ENCODE measurements at regions of chr14 and their contacts with region 1.

Region 1: DNA sequence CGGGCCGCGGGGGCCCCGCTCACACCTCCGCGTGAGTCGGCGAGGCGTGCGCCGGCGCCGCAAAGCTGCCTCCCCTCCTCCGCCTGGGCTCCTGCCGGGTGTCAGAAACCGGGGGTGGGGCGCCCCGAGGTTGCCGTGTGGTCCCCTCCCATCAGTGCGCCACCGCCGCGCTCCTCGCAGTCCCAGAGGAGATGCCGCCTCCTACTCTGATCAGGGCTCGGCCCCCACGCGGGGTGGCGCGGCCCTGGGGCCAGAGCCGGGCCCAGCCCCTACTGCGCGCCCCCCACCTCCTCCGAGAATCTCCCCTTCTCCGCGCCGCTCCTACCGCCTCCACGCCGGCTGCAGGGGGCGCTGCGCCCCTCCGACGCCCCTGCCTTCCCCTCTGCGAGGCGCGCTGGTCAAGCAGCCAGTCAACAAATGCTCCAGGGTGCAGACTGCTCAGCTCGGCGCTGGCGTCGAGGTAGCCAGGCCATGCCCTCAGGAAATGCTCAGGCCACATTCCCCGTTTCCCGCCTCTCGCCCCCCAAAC is 467 bp upstream of the JAG2 start:
- DNase-seq: peak; percentile 81
- H3K4me3 ChIP-seq: peak overlapping the region; percentile 11 to 41 (median 16)
- H3K27ac ChIP-seq: peak overlapping the region; percentile 2
- H3K4me1 ChIP-seq: peaks cover 39% of the 10 kb centered on the region
- H3K27me3 ChIP-seq: no peaks in the 10 kb centered on the region
- CTCF ChIP-seq: peak; percentile 86 to 92
- POLR2A ChIP-seq: no peak

Region 2: DNA sequence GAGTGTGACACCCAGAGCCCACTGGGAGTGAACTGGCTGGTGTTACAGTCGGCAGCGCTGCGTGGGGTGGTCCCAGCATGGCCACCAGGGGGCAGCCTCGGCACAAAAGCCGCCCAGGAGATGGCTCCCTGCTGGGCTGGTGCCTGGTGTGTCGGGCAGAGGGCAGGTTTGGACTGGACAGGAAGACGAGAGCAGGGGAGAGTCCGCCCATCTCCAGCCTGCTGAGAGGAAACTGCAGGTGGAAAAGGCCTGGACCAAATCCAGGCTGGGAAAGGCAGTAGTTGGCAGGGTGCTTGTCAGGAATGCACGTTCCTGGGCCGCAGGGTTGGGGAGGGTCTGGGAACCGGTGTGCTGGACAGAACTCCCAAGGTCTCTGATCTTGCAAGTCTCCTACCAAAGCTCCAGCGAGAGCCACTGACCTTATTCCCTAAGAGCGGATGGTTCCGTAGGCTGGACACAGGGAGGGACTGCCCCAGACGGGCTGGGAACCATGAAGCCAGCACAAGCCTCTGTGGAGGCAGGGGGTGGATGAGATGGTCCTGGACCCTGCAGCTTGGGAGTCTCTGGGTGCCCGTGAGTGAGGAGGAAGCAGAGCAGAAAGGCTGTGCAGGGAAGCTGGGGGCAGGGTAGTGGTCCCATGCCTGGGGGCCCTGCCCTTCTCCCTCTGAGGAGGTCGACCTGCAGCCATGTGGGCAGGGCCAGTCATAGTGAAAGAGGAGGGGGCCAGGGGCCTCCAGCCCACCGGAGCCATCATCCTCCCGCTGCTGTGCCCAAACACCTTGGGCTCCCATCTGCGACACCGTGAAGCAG is 192.6 kb before region 1 on chr14:
- CTCF ChIA-PET with region 1: no interaction called
- POLR2A ChIA-PET with region 1: no interaction called
- dilution Hi-C with region 1: no loop called
- intact Hi-C with region 1: loop called (anchors 5 kb)
- DNase-seq: peak; percentile 74
- H3K4me3 ChIP-seq: no peak overlapping the region
- H3K27ac ChIP-seq: no peak overlapping the region
- H3K4me1 ChIP-seq: peaks cover 39% of the 10 kb centered on the region
- H3K27me3 ChIP-seq: no peaks in the 10 kb centered on the region
- CTCF ChIP-seq: peak; percentile 90 to 98
- POLR2A ChIP-seq: no peak

Region 3: GRCh38 chr14:105156414-105157375 is 12.3 kb before region 1 on chr14:
- CTCF ChIA-PET with region 1: interaction called, 11 read pairs
- POLR2A ChIA-PET with region 1: no interaction called
- dilution Hi-C with region 1: no loop called
- intact Hi-C with region 1: no loop called
- DNase-seq: no peak
- H3K4me3 ChIP-seq: no peak overlapping the region
- H3K27ac ChIP-seq: no peak overlapping the region
- H3K4me1 ChIP-seq: no peaks in the 10 kb centered on the region
- H3K27me3 ChIP-seq: no peaks in the 10 kb centered on the region
- CTCF ChIP-seq: no peak
- POLR2A ChIP-seq: no peak

Region 4: DNA sequence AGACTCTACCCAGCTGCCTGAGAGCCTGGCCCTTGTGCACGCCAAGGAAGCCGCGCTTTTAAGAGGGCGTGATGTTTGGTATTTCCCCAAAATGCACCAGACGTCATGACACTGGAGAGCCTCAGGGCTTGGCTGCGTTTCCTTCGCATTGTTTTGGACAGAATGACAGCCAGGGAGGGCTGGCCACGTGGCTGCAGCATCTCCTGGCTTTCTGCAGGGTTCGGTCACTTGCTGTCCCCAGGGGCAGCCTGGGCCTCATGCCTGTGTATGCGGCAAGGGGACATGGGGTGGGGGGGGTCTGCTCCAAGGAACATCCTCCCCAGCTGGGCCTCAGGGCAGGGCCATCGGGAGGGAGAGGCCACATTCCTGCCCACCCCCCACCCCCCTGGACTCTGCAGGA is 28.2 kb after region 1 on chr14:
- CTCF ChIA-PET with region 1: interaction called, 94 read pairs
- POLR2A ChIA-PET with region 1: interaction called, 4 read pairs
- dilution Hi-C with region 1: no loop called
- intact Hi-C with region 1: loop called (anchors 1 kb)
- DNase-seq: no peak
- H3K4me3 ChIP-seq: no peak overlapping the region
- H3K27ac ChIP-seq: peak overlapping the region; percentile 87
- H3K4me1 ChIP-seq: peaks cover 72% of the 10 kb centered on the region
- H3K27me3 ChIP-seq: no peaks in the 10 kb centered on the region
- CTCF ChIP-seq: no peak
- POLR2A ChIP-seq: no peak

Region 5: DNA sequence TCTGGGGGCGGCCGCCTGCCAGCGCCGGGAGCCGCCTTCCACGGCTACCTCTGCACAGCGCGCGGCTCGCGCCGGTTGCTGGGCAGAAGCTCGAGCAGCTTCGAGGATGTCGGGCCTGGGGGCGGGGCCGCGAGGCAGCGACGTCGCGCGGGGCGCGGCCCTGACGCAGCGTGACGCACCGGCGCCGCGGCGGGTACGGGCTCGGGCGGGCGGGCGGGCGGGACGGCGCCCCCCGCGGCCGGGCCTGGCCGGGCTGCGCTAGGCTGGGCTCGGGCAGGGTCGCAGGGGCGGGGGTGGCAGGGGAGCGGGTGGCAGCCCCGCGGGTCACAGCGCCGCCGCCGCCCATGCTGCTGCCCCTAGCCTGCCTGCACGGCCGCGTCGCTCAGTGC is 79.3 kb after region 1 on chr14 and contains the start of gene BTBD6:
- CTCF ChIA-PET with region 1: interaction called, 13 read pairs
- POLR2A ChIA-PET with region 1: no interaction called
- dilution Hi-C with region 1: no loop called
- intact Hi-C with region 1: loop called (anchors 10 kb)
- DNase-seq: peak; percentile 84
- H3K4me3 ChIP-seq: peak within 1 kb of the TSS; percentile 45 to 80 (median 52)
- H3K27ac ChIP-seq: peak within 1 kb of the TSS; percentile 74
- H3K4me1 ChIP-seq: peaks cover 7% of the 10 kb centered on the region
- H3K27me3 ChIP-seq: no peaks in the 10 kb centered on the region
- CTCF ChIP-seq: no peak
- POLR2A ChIP-seq: peak; percentile 73
- total RNA-seq, gene BTBD6: 57.7 and 63.1 TPM in 2 replicates

Region 6: DNA sequence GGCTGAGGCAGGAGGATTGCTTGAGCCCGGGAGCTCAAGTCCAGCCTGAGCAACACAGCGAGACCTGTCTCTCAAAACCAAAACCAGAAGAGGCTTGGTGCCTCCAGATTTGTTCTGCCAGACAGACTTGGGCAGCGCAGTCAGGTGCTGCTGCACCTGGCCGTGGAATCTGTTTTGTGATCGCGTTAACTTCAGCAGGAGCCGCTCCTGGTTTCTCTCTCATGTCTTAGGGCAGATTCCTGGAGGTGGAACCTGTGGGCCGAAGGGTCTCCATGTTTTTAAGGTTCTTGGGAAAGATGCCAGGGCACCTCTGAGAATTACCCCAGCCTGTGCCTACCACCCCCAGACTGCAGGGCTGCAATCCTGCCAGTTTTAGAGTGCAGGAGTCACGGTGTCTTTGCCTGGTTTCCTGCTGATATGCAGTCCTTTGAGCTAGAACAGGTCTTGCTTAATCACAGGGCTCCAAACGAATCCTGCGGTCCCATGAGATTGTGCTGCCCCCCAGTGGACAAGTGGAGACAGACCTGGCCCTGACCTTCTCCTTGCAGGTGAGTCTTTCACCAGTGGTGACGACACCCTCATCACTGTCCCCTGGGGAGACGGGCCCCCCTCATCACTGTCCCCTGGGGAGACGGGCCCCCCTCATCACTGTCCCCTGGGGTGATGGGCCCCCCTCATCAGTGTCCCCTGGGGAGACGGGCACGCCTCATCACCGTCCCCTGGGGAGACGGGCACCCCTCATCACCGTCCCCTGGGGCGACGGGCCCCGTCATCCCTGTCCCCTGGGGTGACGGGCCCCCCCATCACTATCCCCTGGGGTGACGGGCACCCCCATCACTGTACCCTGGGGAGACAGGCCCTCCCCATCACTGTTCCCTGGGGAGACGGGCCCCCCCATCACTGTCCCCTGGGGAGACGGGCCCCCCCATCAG is 183.1 kb after region 1 on chr14:
- CTCF ChIA-PET with region 1: interaction called, 34 read pairs
- POLR2A ChIA-PET with region 1: no interaction called
- dilution Hi-C with region 1: no loop called
- intact Hi-C with region 1: loop called (anchors 1 kb)
- DNase-seq: peak; percentile 89
- H3K4me3 ChIP-seq: no peak overlapping the region
- H3K27ac ChIP-seq: no peak overlapping the region
- H3K4me1 ChIP-seq: peaks cover 2% of the 10 kb centered on the region
- H3K27me3 ChIP-seq: no peaks in the 10 kb centered on the region
- CTCF ChIP-seq: peak; percentile 76 to 85
- POLR2A ChIP-seq: no peak

Region 7: DNA sequence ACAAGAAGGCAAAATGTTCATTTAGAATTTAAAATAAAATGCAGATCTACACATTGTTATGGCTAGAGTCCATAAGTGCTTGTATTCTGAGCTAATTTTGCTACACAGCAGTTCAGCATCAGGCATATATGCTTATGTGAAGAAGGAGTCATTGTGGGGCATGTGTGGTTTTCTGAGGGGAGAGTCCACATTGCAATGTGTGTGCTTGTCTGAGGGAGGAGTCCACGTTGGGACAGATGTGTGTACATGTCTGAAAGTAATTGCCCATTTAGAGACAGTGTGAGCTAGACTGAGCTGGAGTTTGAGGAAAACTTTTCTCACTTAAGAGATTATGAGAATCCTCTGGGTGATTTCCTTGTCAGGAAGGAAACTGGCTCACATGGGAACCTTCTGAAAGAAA is 1125.3 kb after region 1 on chr14:
- CTCF ChIA-PET with region 1: no interaction called
- POLR2A ChIA-PET with region 1: no interaction called
- dilution Hi-C with region 1: no loop called
- intact Hi-C with region 1: no loop called
- DNase-seq: no peak
- H3K4me3 ChIP-seq: no peak overlapping the region
- H3K27ac ChIP-seq: no peak overlapping the region
- H3K4me1 ChIP-seq: no peaks in the 10 kb centered on the region
- H3K27me3 ChIP-seq: no peaks in the 10 kb centered on the region
- CTCF ChIP-seq: no peak
- POLR2A ChIP-seq: no peak

Measured in endothelial cell of umbilical vein (primary cell).